ENCODE measurements at regions of chr1 and their contacts with region 1.

Region 1: GRCh38 chr1:87077959-87078639 is 163.7 kb downstream of the HS2ST1 start:
- DNase-seq: no peak
- ATAC-seq: no peak

Region 2: DNA sequence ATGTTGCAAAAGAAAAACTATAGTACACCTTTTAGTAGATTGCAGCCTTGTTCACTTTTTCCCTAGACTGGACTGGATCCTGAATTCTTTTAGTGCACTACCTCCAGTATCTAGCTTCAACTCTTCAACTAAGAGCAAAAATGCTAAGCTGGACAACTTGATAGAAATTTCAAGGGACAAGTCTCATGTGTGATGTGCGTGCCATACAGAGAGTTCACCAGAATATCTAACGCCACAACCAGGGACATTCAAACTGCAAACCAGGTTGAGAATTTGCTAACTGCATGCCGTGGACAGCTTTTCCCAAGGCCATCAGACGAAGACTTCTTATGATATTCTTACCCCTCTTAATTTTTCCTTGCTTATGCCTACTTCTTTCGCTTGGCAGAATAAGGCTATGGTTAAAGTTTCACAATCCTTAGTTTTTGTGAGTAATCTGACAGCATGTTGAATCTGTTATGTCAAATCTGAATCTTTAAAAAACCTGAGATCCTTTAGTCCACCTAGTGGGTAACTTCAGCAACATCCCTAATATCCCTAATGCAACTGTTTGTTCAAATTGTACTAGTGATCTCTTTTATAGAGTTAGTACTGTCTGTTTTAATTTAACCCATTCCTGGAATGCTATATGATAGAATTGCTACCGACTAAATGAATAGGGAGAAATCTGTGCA is 1679.6 kb before region 1 on chr1:
- intact Hi-C with region 1: loop called (anchors 5 kb)
- DNase-seq: no peak
- ATAC-seq: peak; percentile 45

Region 3: DNA sequence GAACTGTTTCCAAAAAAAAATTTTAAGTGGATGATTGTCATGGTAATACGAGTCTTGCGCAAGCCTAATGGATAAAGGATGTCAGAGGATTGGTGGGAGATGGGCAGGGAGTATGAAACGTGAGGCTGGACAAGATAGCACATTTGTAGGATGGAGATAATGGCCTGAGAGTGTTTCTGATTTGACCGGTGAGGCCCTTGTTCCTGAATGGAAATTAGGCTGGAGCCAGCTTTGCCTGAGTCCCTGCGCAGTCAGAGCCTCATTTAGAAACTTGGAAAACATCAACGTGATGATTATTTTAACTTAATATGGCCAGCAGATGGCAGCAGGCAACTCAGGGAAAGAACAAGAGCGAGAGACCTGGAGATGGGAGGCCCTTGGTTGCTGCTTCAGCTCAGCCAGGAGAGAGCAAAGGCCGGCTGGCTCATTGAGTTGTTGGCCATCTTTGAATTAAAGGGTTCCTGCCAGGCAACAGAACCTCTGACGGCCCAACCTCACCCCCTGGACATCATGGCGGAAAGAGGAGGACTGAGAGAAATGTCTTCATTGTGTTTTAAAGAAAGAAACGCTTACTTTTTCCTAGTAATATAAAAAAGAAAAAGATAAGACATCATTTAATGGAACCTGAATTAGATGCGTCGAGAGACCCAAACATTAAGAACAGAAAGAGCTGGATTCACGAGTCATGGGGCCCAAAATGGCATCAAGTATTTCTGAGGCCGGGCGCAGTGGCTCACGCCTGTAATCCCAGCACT is 244.5 kb before region 1 on chr1:
- intact Hi-C with region 1: loop called (anchors 10 kb)
- DNase-seq: peak; percentile 76
- ATAC-seq: peak; percentile 95